ENCODE measurements at regions of chrX and their contacts with region 1.

Region 1: DNA sequence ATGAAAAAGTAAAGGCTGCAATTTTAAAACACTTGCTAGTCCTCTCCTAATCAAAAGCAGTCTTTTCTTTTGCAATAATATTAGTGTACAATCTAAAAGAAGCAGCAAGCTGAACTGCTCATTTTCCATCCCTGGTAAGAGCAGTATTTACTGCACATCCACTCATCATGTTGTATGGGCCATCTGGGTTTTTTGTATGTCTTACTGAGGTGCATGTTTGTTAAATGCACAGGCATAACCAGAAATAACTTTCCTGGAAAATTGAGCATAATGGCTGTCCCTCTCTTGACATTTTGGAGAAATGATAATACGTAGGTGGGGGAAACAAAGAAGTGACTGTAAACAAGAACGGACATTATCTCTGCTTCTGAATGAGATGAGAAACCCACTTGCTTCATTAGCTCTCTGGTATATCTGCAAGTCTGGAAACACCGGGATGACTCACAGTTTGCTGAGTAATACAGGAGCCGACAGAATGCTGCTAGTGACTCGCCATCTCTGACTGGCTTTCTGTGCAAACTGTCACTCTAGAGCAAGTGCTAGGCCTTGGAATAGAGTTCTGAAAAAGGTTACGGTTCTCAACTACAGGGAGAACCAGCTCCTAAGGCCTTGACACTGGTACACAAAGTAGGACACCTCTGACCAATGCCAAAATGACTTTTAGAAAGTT is 85.7 kb upstream of the MTM1 start:
- DNase-seq: peak; percentile 80
- ATAC-seq: peak; percentile 85
- H3K4me3 Mint-ChIP-seq: peak overlapping the region; percentile 46
- H3K27ac Mint-ChIP-seq: peak overlapping the region; percentile 99
- H3K4me1 Mint-ChIP-seq: peaks cover 72% of the 10 kb centered on the region
- H3K27me3 Mint-ChIP-seq: no peaks in the 10 kb centered on the region

Region 2: GRCh38 chrX:150365051-150365989 is 117.4 kb before region 1 on chrX:
- CTCF ChIA-PET with region 1: interaction called, 17 read pairs
- DNase-seq: peak; percentile 79
- ATAC-seq: peak; percentile 46
- H3K4me3 Mint-ChIP-seq: peak overlapping the region; percentile 77
- H3K27ac Mint-ChIP-seq: peak overlapping the region; percentile 74
- H3K4me1 Mint-ChIP-seq: peaks cover 24% of the 10 kb centered on the region
- H3K27me3 Mint-ChIP-seq: peaks cover 19% of the 10 kb centered on the region

Region 3: GRCh38 chrX:150464001-150464400 is 18.7 kb before region 1 on chrX:
- CTCF ChIA-PET with region 1: no interaction called
- DNase-seq: no peak
- ATAC-seq: no peak
- H3K4me3 Mint-ChIP-seq: no peak overlapping the region
- H3K27ac Mint-ChIP-seq: no peak overlapping the region
- H3K4me1 Mint-ChIP-seq: peaks cover 6% of the 10 kb centered on the region
- H3K27me3 Mint-ChIP-seq: no peaks in the 10 kb centered on the region

Measured in activated CD8-positive, alpha-beta memory T cell treated with anti-CD3 and anti-CD28 coated beads, Interleukin-2, amount 10 ng/mL, durations not matched to agents 7 days and 5 days (primary cell).